PC-3 (cell line): ENCODE measurements at regions of chr17 and their contacts with region 1.

Region 1: DNA sequence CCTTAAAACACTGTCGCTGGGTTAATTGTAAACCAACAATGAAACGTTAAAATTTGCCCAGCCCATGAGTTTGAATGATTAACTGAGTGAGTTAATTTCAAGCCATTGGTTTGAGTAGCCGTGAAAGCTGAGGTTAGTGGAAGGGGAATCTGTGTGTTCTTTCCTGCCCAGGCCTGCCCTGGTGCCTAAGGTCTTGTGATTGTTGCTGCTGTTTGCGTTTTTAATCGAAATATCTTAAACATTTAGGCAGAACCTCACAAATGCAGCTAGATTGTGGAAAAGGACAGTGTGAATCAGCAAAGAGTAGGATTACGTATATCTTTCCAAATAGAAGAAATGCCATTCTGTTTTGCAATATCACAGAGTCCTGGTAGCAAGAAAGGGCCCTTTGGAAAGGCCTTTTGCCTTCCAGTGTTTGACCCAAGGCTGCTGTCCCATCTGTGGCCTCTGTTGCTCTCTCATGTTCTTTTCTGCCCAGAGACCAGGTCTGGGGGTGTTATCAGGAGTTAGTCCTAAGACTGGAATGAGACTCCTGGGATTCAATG is 113.8 kb downstream of the MSI2 start:
- DNase-seq: peak; percentile 73
- ATAC-seq: peak; percentile 42
- H3K4me3 ChIP-seq: no peak overlapping the region
- H3K27ac ChIP-seq: peak overlapping the region; percentile 61
- H3K4me1 ChIP-seq: peaks cover 56% of the 10 kb centered on the region
- H3K27me3 ChIP-seq: no peaks in the 10 kb centered on the region
- CTCF ChIP-seq: no peak

Region 2: DNA sequence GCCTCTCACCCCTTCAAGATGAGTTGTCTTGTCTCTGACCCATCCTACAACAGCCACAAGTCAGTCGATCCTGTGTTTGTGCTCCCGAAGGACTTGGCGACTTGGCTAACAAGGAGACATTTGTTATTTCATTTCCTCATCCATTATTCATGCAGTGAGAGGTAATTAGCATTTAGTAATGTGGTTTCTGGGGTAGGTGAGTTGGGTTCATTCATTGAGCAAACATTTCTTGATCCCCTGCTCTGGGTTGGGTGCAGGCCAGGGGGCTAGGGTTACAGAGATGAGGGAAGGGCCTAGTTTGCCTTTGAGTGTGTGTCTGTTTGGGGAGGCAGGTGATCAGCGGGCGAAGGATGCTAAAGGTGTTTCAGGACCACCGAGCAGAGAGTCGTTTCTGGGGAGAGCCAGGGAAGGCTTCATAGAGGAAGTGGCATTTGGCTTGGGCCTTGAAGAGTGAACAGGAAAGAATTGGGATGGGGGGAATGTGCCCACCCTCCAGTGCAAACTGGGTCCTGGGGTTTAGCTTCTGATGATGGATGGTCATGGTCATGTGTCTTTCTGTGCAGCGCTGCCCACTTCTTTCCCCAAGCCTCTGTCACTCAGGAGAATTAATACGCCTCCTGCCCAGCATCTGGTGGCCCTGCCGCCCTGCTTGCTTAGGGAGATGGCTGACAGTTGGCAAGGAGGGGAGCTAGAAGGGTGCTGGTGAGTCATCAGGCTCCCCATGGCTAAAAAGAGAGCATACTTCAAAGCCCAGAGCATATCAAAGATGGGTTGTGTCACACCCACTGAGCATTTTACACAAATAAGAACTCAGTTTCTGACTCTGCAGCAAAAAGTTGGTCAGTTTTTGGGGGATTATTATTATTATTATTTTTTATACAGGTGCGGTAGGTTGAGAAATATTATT is 75.2 kb before region 1 on chr17:
- CTCF ChIA-PET with region 1: no interaction called
- POLR2A ChIA-PET with region 1: no interaction called
- intact Hi-C with region 1: no loop called
- DNase-seq: peak; percentile 44
- ATAC-seq: peak; percentile 71
- H3K4me3 ChIP-seq: peak overlapping the region; percentile 36; the same call in 1 of the 2 replicates
- H3K27ac ChIP-seq: peak overlapping the region; percentile 88
- H3K4me1 ChIP-seq: peaks cover 29% of the 10 kb centered on the region
- H3K27me3 ChIP-seq: no peaks in the 10 kb centered on the region
- CTCF ChIP-seq: no peak

Region 3: DNA sequence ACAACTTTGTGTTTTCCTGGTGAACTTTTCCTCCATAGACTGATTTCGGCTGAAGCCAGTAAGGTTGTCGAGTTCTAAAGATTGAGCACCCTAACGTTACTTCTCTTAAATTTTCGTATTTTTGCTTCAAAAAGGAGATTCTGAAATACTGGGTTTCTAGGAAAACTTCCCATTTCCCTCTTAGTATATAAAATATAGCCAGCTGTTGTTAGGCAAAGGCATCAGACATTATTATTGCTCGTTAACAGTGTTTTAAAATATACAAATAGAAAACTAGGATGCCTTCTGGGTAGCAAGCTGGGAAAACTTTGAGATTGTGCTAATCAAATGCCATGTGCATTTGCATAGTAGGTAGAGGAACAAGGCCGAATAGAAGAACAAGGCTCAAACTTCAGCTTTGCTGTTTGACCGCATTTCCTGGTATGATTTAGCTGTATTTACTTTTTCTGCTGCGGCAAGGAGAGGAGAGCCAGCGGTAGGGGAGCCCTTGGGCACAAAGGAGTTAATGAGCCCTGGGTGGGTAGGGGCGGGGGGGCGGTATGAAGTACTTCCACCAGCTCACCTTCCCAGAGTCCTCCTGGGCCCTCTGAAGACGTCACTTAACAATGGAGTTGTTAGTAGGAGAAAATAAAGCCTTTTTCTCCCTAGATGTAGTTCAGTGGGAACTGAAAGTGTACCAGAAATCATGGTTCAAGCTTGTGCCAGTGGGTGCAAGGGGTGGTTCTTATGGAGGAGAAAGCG is 38.1 kb after region 1 on chr17:
- CTCF ChIA-PET with region 1: no interaction called
- POLR2A ChIA-PET with region 1: no interaction called
- intact Hi-C with region 1: loop called (anchors 2 kb)
- DNase-seq: peak; percentile 76
- ATAC-seq: peak; percentile 51
- H3K4me3 ChIP-seq: peak overlapping the region; percentile 57
- H3K27ac ChIP-seq: peak overlapping the region; percentile 96
- H3K4me1 ChIP-seq: peaks cover 37% of the 10 kb centered on the region
- H3K27me3 ChIP-seq: no peaks in the 10 kb centered on the region
- CTCF ChIP-seq: no peak

Region 4: DNA sequence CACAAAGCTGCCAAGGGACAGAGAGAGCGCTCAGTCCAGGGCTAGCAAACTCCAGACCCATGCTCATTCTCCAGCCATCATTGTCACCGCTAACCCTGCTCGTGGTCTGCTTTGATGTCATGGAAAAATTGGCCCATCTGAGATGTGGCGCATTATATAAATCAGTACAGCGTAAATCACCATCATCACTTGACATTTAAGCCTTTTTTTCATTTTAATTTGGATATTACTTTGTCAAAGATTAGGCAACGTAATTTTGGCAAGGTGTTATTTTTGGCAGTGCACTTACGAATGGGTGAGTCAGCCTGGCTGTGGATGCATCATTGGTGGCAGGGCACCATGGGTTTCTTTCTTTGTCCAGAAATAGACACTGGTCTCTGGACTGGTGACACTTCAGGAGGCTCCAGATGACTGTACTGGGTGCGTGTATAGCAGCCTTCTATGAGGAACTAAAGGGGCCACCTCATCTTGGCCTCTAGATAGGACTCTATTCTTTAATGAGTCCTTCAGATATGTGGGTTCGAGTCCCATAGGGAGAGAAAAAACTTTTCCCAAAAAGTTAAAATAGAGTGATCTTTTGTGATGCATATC is 52.6 kb after region 1 on chr17:
- CTCF ChIA-PET with region 1: no interaction called
- POLR2A ChIA-PET with region 1: no interaction called
- intact Hi-C with region 1: loop called (anchors 2 kb)
- DNase-seq: peak; percentile 87
- ATAC-seq: peak; percentile 57
- H3K4me3 ChIP-seq: no peak overlapping the region
- H3K27ac ChIP-seq: peak overlapping the region; percentile 86
- H3K4me1 ChIP-seq: peaks cover 59% of the 10 kb centered on the region
- H3K27me3 ChIP-seq: no peaks in the 10 kb centered on the region
- CTCF ChIP-seq: no peak

Region 5: GRCh38 chr17:57518587-57519581 is 148.8 kb after region 1 on chr17:
- CTCF ChIA-PET with region 1: interaction called, 6 read pairs
- POLR2A ChIA-PET with region 1: no interaction called
- intact Hi-C with region 1: loop called (anchors 10 kb)
- DNase-seq: peak; percentile 74
- ATAC-seq: peak; percentile 45
- H3K4me3 ChIP-seq: no peak overlapping the region
- H3K27ac ChIP-seq: peak overlapping the region; percentile 31
- H3K4me1 ChIP-seq: peaks cover 32% of the 10 kb centered on the region
- H3K27me3 ChIP-seq: no peaks in the 10 kb centered on the region
- CTCF ChIP-seq: no peak

Region 6: DNA sequence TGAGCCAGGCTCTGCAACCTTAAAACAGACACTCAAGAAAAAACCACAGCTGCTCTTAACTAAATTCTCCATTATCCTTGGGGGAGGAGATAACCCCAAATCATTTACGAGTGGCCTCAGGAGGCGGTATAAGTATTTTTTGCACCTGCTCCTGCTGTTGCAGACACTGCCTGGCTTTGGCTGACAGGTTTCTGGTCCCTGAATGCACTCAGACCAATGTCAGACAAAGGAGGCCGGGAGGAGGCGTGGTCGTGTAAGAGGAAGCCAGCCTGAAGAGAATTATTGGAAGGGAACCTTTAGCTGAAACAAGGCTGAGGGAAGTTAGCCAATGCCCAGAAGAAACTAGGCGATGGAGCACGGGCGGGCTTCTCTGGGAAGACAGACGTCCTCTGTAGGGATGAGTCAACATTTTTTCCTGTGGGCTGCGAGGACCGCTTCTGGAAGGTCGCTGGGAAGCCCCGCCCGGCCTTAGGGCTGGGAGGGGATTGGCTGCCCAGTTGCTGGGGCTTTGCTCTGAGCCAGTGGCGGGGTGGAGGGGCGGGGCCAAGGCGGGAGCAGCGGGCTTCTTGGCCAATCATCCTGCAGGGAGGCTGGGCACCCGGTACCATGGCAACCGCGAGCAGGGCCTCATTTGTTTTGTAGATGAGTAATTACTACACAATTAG is 292.7 kb after region 1 on chr17:
- CTCF ChIA-PET with region 1: no interaction called
- POLR2A ChIA-PET with region 1: no interaction called
- intact Hi-C with region 1: loop called (anchors 2 kb)
- DNase-seq: peak; percentile 100
- ATAC-seq: peak; percentile 98
- H3K4me3 ChIP-seq: peak overlapping the region; percentile 44
- H3K27ac ChIP-seq: peak overlapping the region; percentile 83
- H3K4me1 ChIP-seq: peaks cover 20% of the 10 kb centered on the region
- H3K27me3 ChIP-seq: no peaks in the 10 kb centered on the region
- CTCF ChIP-seq: peak; percentile 24; the same call in 1 of the 2 replicates

Region 7: GRCh38 chr17:57671667-57672632 is 301.8 kb after region 1 on chr17:
- CTCF ChIA-PET with region 1: no interaction called
- POLR2A ChIA-PET with region 1: no interaction called
- intact Hi-C with region 1: loop called (anchors 5 kb)
- DNase-seq: peak; percentile 81
- ATAC-seq: peak; percentile 99
- H3K4me3 ChIP-seq: no peak overlapping the region
- H3K27ac ChIP-seq: no peak overlapping the region
- H3K4me1 ChIP-seq: peaks cover 4% of the 10 kb centered on the region; the same call in 1 of the 2 replicates
- H3K27me3 ChIP-seq: no peaks in the 10 kb centered on the region
- CTCF ChIP-seq: peak; percentile 100